A673 (cell line): ENCODE measurements at regions of chr20 and their contacts with region 1.

Region 1: DNA sequence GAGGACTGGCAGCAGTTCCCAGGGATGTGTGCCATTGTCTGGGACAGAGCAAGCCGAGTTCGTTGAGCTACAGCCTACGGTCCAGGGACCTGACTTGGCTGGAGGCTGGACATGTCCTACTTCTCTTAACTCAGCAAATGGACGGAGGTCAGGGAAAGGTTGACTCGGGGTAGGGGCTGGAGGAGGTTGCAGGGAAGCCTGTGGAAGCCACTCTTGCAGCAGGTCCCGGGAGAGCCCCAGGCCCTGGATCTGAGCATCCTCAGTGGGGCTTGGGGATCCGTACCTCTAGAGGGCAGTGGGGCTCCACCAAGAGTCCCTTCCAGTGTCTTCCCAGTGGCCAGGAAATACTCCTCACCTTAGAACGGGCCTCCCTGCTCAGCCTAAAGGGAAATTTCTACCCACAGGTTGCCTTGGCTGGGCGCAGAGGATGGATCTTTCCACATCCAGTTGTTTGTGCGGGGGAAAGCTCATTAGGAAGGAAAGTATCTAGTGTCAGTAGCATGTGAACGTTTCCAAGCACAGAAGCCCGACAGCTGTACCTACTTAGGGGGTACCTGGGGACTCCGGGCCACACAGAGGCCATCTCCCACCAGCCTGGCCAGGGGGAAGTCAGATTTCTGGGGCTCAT is 170.2 kb downstream of the NFATC2 start:
- DNase-seq: peak; percentile 74
- H3K4me3 ChIP-seq: no peak overlapping the region
- H3K27ac ChIP-seq: no peak overlapping the region
- H3K4me1 ChIP-seq: no peaks in the 10 kb centered on the region
- H3K27me3 ChIP-seq: no peaks in the 10 kb centered on the region
- CTCF ChIP-seq: peak; percentile 83

Region 2: DNA sequence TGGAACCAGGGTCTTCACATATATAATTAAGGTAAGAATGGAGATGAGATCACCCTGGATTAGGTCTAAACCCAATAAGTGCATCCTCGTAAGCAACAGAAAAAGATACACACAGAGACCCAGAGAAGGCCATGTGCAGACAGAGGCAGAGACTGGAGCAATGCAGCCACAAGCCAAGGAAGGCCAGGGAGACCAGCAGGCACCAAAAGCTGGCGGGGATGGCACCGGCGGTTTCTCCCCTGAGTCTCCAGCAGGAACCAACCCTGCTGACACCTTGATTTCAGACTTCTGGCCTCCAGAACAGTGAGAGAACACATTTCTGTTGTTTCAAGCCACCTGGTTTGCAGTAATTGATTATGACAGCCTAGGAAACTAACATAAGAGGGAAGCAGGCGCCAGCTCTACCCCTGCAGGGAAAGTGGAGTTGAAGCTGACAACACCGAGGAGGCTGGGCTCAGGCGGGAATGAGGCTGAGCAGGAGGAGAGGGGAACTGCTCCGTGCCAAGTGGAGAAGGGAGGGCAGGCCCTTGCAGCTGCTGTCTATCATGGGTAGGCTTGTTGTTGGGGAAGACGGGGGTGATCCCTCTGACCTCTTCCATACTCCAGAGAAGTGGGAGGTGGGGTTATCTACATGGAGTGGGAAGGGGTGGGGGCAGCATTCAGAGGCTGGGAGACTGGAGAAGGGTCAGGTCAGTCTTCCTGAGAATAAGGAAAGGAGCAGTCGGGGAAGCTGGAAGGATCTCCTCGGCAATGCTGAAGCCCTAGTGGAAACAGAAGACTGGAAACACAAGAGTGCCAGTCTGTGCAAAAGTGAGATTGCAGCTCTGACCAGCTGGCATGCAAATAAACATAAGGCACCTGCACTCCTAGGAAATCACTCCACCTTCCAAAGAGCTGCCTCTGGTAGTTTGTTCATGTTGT is 97.5 kb after region 1 on chr20:
- CTCF ChIA-PET with region 1: no interaction called
- POLR2A ChIA-PET with region 1: no interaction called
- intact Hi-C with region 1: no loop called
- DNase-seq: no peak
- H3K4me3 ChIP-seq: no peak overlapping the region
- H3K27ac ChIP-seq: no peak overlapping the region
- H3K4me1 ChIP-seq: no peaks in the 10 kb centered on the region
- H3K27me3 ChIP-seq: no peaks in the 10 kb centered on the region
- CTCF ChIP-seq: no peak

Region 3: DNA sequence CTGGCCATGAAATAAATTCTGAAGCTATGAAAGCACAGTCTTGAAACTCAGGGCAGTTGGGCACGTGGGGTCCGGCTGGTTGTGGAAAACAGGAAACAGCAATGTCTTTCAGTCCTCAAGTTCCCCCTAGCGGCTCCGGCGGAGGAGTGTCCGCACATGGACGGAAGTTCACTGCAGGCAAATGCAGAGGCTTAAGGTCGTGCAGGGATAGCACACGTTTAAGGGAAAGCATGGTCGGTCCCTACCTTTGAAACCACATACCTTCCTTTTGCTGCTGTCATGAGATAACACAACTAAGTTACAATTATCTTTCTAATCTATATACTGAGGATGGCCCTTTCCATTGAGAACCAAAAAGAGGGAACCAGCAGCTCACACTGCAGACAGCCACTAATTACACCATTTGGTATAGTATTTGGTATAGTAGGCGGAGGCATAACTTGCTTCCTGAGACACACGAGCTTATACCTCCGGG is 222.8 kb after region 1 on chr20:
- CTCF ChIA-PET with region 1: interaction called, 4 read pairs
- POLR2A ChIA-PET with region 1: interaction called, 5 read pairs
- intact Hi-C with region 1: loop called (anchors 2 kb)
- DNase-seq: peak; percentile 92
- H3K4me3 ChIP-seq: no peak overlapping the region
- H3K27ac ChIP-seq: no peak overlapping the region
- H3K4me1 ChIP-seq: peaks cover 13% of the 10 kb centered on the region
- H3K27me3 ChIP-seq: no peaks in the 10 kb centered on the region
- CTCF ChIP-seq: peak; percentile 93

Region 4: GRCh38 chr20:51624157-51624731 is 252.0 kb after region 1 on chr20:
- CTCF ChIA-PET with region 1: no interaction called
- POLR2A ChIA-PET with region 1: no interaction called
- intact Hi-C with region 1: loop called (anchors 2 kb)
- DNase-seq: peak; percentile 77
- H3K4me3 ChIP-seq: no peak overlapping the region
- H3K27ac ChIP-seq: no peak overlapping the region
- H3K4me1 ChIP-seq: peaks cover 3% of the 10 kb centered on the region
- H3K27me3 ChIP-seq: no peaks in the 10 kb centered on the region
- CTCF ChIP-seq: peak; percentile 81

Region 5: DNA sequence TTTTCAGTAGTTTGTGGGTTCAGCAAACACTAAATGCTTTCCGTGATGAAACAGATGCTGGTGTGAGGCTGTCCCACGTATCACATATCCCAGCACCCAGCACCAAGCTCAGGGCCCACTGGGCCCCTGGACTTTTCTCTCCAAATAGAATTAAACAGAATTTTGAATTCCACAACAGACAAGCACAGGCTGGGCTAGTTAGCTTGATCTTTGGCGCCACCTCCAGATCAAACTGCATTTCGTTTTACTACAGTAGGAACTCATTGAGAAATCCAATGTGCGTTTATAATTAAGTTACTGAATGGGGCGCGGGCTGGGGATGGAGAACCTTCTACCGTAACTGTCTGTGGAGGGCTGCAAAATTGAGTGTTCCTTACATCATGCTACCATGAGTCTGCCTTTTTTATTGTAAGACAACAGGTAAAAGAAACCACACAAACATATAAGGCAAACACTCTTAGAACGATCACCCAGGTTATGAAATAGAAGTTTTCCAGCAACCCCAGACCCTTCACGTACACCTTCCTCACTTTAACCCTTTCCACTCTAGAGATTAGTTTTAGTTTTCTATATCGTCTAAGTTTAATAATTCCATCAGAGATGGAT is 711.4 kb after region 1 on chr20:
- CTCF ChIA-PET with region 1: no interaction called
- POLR2A ChIA-PET with region 1: no interaction called
- intact Hi-C with region 1: loop called (anchors 5 kb)
- DNase-seq: peak; percentile 86
- H3K4me3 ChIP-seq: no peak overlapping the region
- H3K27ac ChIP-seq: no peak overlapping the region
- H3K4me1 ChIP-seq: peaks cover 20% of the 10 kb centered on the region
- H3K27me3 ChIP-seq: no peaks in the 10 kb centered on the region
- CTCF ChIP-seq: peak; percentile 85

Region 6: DNA sequence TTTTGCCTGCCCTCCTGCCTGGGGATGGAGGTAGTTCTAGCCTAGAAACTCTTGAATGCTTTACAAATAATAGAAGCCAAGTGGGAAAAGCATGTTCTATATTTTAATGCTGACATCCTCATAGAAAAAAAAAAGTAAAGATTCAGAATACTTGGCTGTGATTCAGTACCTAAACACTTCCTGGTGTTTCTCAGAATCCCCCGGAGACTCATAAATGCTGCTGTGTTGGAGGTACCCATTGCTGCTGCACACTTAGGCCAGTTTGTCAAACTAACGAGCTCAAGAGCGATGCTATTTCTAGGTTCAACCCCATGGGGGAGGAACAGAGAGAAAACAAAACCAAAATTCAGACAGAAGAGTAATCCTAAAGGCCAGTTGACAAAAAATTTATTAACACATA is 858.1 kb after region 1 on chr20:
- CTCF ChIA-PET with region 1: no interaction called
- POLR2A ChIA-PET with region 1: no interaction called
- intact Hi-C with region 1: no loop called
- DNase-seq: peak; percentile 88
- H3K4me3 ChIP-seq: no peak overlapping the region
- H3K27ac ChIP-seq: no peak overlapping the region
- H3K4me1 ChIP-seq: peaks cover 27% of the 10 kb centered on the region
- H3K27me3 ChIP-seq: no peaks in the 10 kb centered on the region
- CTCF ChIP-seq: no peak

Region 7: GRCh38 chr20:52572687-52573086 is 1200.4 kb after region 1 on chr20:
- CTCF ChIA-PET with region 1: interaction called, 10 read pairs
- POLR2A ChIA-PET with region 1: no interaction called
- intact Hi-C with region 1: no loop called
- DNase-seq: peak; percentile 42
- H3K4me3 ChIP-seq: no peak overlapping the region
- H3K27ac ChIP-seq: no peak overlapping the region
- H3K4me1 ChIP-seq: peaks cover 13% of the 10 kb centered on the region
- H3K27me3 ChIP-seq: no peaks in the 10 kb centered on the region
- CTCF ChIP-seq: no peak